BJ (cell line): ENCODE measurements at regions of chr10 and their contacts with region 1.

Region 1: GRCh38 chr10:61896854-61897661 is 4.4 kb upstream of the ARID5B start:
- DNase-seq: no peak
- H3K4me3 ChIP-seq: 0 out of 2 replicates have a peak overlapping the region, but pooled peaks have one; percentile 9
- H3K27me3 ChIP-seq: no peaks in the 10 kb centered on the region
- CTCF ChIP-seq: peak; percentile 76

Region 2: GRCh38 chr10:60629332-60629731 is 1267.7 kb before region 1 on chr10:
- CTCF ChIA-PET with region 1: no interaction called
- POLR2A ChIA-PET with region 1: no interaction called
- DNase-seq: no peak
- H3K4me3 ChIP-seq: no peak overlapping the region
- H3K27me3 ChIP-seq: 0 out of 2 replicates have a peak, but pooled peaks cover 2% of the 10 kb centered on the region
- CTCF ChIP-seq: no peak

Region 3: DNA sequence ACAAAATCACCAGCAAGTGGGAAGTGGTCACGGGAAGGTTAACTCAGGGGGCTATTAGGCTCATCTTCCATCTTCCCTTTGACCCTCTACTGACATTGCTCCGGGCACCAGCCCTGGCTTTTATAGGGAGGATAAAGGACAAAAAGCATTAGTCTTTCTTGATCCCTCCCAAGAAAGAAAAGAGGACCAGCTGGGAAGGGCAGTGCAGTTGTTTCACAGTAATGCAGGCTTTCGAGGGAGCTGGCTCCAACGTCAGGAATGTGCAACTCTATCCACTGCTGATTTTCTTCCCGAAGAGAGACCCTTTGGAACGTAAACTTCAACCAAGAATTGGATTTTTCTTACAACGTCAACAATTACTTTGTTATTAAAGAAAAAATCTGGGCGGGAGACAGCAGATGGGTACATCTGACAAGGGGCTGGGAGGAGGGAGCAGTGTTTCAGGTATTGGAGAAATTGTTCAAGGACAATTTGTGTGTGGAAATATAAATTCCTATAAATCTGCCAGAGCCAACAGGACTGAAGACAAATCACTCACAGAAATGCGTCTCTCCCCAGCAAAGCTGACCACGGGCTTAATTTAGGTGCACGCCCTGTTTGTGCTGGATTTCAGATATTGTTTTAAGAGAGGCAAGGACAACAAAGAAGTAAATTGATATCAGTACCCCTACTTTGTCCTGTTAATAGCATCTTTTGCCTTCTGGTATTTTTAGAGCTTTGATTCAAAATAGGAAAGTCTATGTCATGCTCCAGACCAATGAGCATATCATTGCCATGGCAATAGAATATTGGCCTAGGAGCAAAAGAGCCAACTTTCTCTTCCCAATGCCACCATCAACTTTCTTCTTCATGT is 18.9 kb before region 1 on chr10:
- CTCF ChIA-PET with region 1: interaction called, 10 read pairs
- POLR2A ChIA-PET with region 1: no interaction called
- DNase-seq: no peak
- H3K4me3 ChIP-seq: no peak overlapping the region
- H3K27me3 ChIP-seq: no peaks in the 10 kb centered on the region
- CTCF ChIP-seq: no peak

Region 4: GRCh38 chr10:61883374-61884025 is 13.6 kb before region 1 on chr10:
- CTCF ChIA-PET with region 1: interaction called, 14 read pairs
- POLR2A ChIA-PET with region 1: no interaction called
- DNase-seq: no peak
- H3K4me3 ChIP-seq: no peak overlapping the region
- H3K27me3 ChIP-seq: no peaks in the 10 kb centered on the region
- CTCF ChIP-seq: no peak